Activated CD4-positive, alpha-beta memory T cell treated with anti-CD3 and anti-CD28 coated beads for 36 hours (primary cell): ENCODE measurements at regions of chr11 and their contacts with region 1.

Region 1: DNA sequence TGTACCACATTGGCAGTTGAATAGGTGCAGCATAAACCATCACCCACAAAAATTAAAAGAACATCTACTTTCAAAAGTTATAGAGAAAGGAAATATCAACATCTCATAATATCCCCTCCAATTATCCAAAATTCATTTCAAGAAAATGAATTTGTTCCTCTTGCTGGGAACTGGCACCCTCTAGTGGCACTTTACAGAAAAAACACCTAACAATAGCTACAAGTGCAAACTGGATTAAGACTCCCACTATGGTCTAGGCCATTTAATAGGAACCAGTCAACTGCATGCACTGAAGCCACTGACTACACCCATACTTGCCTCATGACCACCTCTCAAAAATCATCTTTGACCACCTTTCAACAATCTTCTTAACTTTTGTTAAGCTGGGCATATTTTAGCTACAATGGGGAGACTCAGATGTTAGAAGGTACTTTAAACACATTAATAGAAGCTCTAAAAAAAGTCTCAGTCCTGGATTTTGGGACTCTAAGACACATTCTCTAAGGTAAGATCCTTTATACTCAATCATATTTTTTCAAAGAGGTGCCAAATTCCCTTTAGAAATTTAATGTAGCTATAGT is 17.3 kb downstream of the TRAF6 start:
- DNase-seq: no peak
- H3K4me3 Mint-ChIP-seq: no peak overlapping the region
- H3K27ac Mint-ChIP-seq: no peak overlapping the region
- H3K4me1 Mint-ChIP-seq: peaks cover 16% of the 10 kb centered on the region
- H3K27me3 Mint-ChIP-seq: no peaks in the 10 kb centered on the region

Region 2: DNA sequence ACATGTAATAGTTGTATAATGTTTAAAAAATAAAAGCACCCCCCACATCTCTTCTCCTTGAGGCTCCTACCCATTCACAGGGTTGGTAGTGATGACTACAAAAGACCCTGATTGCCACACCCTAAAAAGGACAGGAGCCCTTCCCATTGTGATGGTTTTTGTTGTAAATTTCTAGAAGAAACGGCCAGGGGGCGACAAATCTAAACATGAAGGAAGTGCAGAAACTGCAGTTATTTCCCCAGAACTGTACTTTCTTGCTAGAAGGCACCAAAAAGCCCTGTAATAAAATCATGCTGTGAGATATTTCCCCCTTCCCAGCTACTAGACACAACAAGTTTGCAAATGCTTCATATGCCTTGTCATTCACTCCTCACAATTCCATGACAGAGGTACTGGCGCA is 185.9 kb before region 1 on chr11:
- CTCF ChIA-PET with region 1: interaction called, 8 read pairs
- POLR2A ChIA-PET with region 1: no interaction called
- intact Hi-C with region 1: loop called (anchors 1 kb)
- DNase-seq: peak; percentile 31
- H3K4me3 Mint-ChIP-seq: no peak overlapping the region
- H3K27ac Mint-ChIP-seq: no peak overlapping the region
- H3K4me1 Mint-ChIP-seq: peaks cover 5% of the 10 kb centered on the region
- H3K27me3 Mint-ChIP-seq: peaks cover 4% of the 10 kb centered on the region

Region 3: DNA sequence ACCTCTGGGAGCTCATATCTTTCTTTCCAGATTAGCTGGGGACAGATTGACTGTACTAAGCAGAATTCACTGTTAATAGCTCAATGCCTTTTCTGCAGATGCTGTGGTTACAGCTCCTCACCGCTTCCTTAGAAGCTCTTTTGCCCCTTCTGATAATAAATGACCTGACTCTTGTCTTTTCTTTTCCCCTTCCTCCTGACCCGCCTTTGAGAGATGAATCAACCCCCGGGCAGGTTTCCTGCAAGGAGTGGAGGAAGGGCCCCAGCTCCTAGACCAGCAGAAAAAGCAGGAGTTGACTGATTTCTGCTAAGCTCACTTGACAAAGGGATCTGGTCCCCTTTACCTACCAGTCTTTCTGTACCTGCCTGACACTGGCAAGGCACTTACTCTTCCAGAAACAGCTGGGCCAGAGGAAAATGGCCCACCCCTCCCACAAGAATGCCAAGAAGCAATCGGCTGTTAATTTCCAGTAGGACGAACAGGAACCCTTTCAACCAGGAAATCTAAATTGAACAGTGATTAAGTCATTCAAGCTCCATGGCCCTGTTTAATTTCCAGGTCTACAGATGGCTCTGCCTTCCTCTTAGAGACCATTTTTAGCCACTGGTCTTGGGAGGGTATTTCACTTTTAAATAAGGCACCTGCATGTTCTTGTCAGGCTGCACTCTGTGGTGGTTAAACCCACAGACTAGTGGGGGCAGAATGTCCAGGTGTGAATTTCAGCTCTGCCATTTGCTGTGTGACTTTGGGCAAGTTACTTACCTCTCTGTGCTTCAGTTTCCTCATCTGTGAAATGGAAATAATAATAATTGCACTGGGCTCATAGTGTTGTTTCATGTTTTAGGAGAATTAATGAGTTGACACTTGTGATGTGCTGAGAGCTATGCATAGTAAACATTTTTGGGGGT is 129.2 kb before region 1 on chr11:
- CTCF ChIA-PET with region 1: interaction called, 14 read pairs
- POLR2A ChIA-PET with region 1: no interaction called
- intact Hi-C with region 1: no loop called
- DNase-seq: no peak
- H3K4me3 Mint-ChIP-seq: no peak overlapping the region
- H3K27ac Mint-ChIP-seq: peak overlapping the region; percentile 52
- H3K4me1 Mint-ChIP-seq: peaks cover 51% of the 10 kb centered on the region
- H3K27me3 Mint-ChIP-seq: peaks cover 2% of the 10 kb centered on the region

Region 4: GRCh38 chr11:36478700-36479329 is 14.0 kb before region 1 on chr11:
- CTCF ChIA-PET with region 1: interaction called, 53 read pairs
- POLR2A ChIA-PET with region 1: no interaction called
- intact Hi-C with region 1: no loop called
- DNase-seq: peak; percentile 38
- H3K4me3 Mint-ChIP-seq: no peak overlapping the region
- H3K27ac Mint-ChIP-seq: no peak overlapping the region
- H3K4me1 Mint-ChIP-seq: peaks cover 12% of the 10 kb centered on the region
- H3K27me3 Mint-ChIP-seq: no peaks in the 10 kb centered on the region